ENCODE measurements at regions of chr3 and their contacts with region 1.

Region 1: GRCh38 chr3:128725932-128726690 is at the start of gene RAB7A:
- DNase-seq: peak; percentile 98
- H3K4me3 Mint-ChIP-seq: peak within 1 kb of the TSS; percentile 85
- H3K27ac Mint-ChIP-seq: peak within 1 kb of the TSS; percentile 89
- H3K4me1 Mint-ChIP-seq: peaks cover 50% of the 10 kb centered on the region
- H3K27me3 Mint-ChIP-seq: peaks cover 5% of the 10 kb centered on the region
- total RNA-seq, gene RAB7A: 213 to 225 TPM

Region 2: GRCh38 chr3:128629936-128630335 is 96.2 kb before region 1 on chr3:
- CTCF ChIA-PET with region 1: no interaction called
- POLR2A ChIA-PET with region 1: no interaction called
- DNase-seq: no peak
- H3K4me3 Mint-ChIP-seq: no peak overlapping the region
- H3K27ac Mint-ChIP-seq: no peak overlapping the region
- H3K4me1 Mint-ChIP-seq: peaks cover 3% of the 10 kb centered on the region
- H3K27me3 Mint-ChIP-seq: no peaks in the 10 kb centered on the region

Region 3: GRCh38 chr3:128714887-128715491 is 11.1 kb before region 1 on chr3:
- CTCF ChIA-PET with region 1: no interaction called
- POLR2A ChIA-PET with region 1: interaction called, 13 read pairs
- DNase-seq: peak; percentile 55
- H3K4me3 Mint-ChIP-seq: peak overlapping the region; percentile 48
- H3K27ac Mint-ChIP-seq: peak overlapping the region; percentile 84
- H3K4me1 Mint-ChIP-seq: peaks cover 28% of the 10 kb centered on the region
- H3K27me3 Mint-ChIP-seq: peaks cover 3% of the 10 kb centered on the region

Region 4: DNA sequence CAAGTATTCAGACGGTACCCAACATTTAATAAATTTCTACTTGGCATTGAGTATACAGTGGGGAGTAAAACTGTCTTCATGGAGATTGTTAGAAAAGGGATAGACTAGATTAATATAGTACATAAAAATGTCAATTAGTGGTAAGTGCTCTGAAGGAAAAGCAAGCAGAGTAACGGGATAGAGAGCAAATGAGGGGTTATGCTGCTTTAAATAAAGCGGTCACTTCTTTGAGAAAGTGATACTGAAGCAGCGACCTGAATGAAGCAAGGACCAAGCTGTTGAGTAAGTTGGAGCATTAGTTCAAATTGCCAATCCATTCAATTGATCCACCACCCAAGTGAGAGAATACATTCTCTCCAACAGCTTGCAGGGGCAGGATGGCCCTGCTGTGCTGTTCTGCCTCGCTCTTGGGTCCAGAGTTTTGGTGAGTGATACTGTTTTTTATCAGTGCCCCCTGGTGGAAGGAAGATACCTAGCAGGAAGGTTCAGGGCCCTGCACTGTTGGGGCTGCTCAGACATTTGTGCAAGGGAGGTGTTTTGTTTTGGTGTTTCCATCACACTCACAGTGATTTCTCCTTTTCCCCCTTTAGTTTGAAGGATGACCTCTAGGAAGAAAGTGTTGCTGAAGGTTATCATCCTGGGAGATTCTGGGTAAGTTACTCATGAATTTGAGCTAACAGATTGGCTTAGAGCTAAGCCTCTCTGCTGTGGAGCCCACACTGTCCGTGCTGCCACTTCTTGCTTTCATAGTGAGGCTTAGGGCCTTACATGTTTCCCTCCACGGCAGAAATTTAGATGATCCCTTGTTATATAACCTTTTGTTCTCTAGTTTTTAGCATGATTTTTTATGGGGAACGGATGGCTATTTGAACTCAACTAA is 68.9 kb after region 1 on chr3:
- CTCF ChIA-PET with region 1: interaction called, 11 read pairs
- POLR2A ChIA-PET with region 1: interaction called, 7 read pairs
- DNase-seq: peak; percentile 71
- H3K4me3 Mint-ChIP-seq: no peak overlapping the region
- H3K27ac Mint-ChIP-seq: peak overlapping the region; percentile 77
- H3K4me1 Mint-ChIP-seq: peaks cover 72% of the 10 kb centered on the region
- H3K27me3 Mint-ChIP-seq: no peaks in the 10 kb centered on the region